GM10248 (cell line): ENCODE measurements at regions of chr1 and their contacts with region 1.

Region 1: GRCh38 chr1:16946646-16947045 is 24.9 kb downstream of the CROCC start:
- DNase-seq: no peak
- CTCF ChIP-seq: no peak

Region 2: GRCh38 chr1:16967095-16967575 is 20.5 kb after region 1 on chr1:
- CTCF ChIA-PET with region 1: interaction called, 36 read pairs
- POLR2A ChIA-PET with region 1: no interaction called
- DNase-seq: no peak
- CTCF ChIP-seq: no peak

Region 3: DNA sequence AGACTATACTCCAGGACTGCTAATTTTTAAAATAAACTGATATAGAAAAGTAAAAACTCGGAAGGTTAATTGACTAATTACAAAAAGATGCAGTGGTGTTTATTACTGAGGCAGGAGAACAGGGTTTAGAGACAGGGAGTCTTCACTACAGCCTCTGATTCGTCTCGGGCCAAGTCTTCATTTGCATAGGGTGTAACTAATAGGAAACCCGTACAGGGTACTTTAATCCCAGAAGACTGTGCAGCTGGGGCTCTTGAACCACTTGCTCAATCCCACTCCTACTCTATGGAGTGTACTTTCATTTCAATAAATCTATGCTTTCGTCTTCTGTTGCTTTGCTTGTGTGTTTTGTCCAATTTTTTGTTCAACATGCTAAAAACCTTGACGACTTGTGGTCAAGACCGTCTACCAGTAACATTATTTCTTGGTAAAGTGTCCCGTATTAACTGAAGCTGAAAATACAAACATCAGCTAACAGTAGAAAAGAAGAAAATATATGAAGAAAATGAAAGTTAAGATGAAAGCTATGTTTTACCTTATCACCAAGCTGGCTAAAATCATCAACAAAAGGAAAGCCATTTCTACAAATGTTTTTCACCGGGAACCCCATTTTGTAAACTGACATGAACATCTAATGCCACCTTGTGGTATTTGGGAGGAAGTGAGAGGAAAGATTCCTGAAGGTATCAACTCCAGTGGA is 99.1 kb after region 1 on chr1:
- CTCF ChIA-PET with region 1: interaction called, 33 read pairs
- POLR2A ChIA-PET with region 1: no interaction called
- DNase-seq: peak; percentile 49
- CTCF ChIP-seq: peak; percentile 56